ENCODE measurements at regions of chr5 and their contacts with region 1.

Region 1: DNA sequence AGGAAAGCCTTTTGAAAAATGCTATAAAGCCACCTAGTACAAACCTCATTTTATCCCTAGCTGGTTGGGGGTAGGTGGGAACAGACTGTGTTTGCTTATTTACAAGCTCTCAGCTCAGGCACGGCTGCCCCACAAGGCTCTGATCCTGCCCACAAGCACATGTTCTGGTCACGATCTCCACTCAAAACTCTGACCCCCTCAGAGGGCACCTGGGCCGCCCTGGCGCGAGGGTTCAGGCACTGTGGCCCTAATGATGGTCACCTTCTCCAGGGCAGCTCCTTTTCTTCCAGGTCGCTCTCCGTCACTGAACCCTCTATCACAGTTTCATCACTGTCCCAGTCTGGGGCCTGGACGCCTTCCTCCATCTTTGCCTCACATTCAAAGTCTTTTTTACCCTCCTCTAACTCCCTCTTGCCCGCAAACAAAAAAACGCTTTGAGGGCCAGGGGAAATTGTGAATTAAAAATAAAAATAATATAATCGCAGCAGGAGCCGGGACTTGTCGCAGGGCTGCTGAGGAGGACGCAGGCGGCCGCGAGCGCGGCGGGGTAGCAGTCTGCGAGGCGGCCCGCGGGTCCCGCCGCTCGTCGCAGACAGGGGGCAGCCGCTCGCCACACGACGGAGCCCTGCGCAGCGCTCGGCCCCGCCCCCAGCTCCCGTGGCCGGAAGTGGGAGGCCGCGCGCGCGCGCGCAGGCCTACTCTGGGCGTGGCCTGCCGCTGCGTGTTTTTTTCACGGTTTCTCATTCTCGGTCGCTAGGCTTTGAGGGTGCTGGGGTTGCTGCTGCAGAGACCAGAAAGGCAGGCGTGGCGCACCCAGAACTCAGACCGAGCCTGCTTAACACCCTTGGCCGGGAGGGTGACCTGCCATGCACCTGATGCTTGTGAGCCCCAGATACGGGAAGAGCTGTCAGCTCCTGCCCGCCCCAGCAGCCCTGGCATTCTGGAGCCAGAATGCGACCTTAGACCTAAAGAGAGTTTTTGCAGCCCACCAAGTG is at the start of gene ANKRD31:
- DNase-seq: peak; percentile 90
- H3K4me3 Mint-ChIP-seq: peak within 1 kb of the TSS; percentile 96
- H3K27ac Mint-ChIP-seq: peak within 1 kb of the TSS; percentile 94
- H3K4me1 Mint-ChIP-seq: peaks cover 15% of the 10 kb centered on the region
- H3K27me3 Mint-ChIP-seq: no peaks in the 10 kb centered on the region
- total RNA-seq, gene ANKRD31: 0.29 to 0.33 TPM

Region 2: GRCh38 chr5:74993743-74994142 is 242.9 kb before region 1 on chr5:
- CTCF ChIA-PET with region 1: no interaction called
- POLR2A ChIA-PET with region 1: no interaction called
- intact Hi-C with region 1: no loop called
- DNase-seq: no peak
- H3K4me3 Mint-ChIP-seq: no peak overlapping the region
- H3K27ac Mint-ChIP-seq: no peak overlapping the region
- H3K4me1 Mint-ChIP-seq: no peaks in the 10 kb centered on the region
- H3K27me3 Mint-ChIP-seq: peaks cover 5% of the 10 kb centered on the region

Region 3: DNA sequence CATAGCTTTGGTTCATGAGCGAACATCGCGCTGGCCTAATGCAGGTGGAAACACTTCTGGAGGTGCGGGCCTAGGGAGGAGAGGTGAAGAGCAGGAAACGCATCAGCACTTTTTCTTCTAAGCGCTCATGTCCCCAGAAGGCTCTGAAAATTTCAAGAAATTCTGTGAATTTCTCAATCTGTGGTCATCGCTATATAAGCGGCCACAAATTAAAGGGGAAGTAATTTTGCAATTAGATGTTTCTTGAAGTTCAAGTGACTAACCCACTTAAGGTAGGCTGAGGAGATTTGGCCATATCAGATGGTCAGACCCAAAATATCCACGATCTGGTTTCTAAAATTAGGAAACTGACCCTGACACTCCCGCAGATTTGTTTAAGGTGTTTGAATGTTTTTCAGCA is 83.7 kb after region 1 on chr5:
- CTCF ChIA-PET with region 1: interaction called, 4 read pairs
- POLR2A ChIA-PET with region 1: no interaction called
- intact Hi-C with region 1: loop called (anchors 5 kb)
- DNase-seq: no peak
- H3K4me3 Mint-ChIP-seq: no peak overlapping the region
- H3K27ac Mint-ChIP-seq: no peak overlapping the region
- H3K4me1 Mint-ChIP-seq: peaks cover 21% of the 10 kb centered on the region
- H3K27me3 Mint-ChIP-seq: no peaks in the 10 kb centered on the region

Region 4: DNA sequence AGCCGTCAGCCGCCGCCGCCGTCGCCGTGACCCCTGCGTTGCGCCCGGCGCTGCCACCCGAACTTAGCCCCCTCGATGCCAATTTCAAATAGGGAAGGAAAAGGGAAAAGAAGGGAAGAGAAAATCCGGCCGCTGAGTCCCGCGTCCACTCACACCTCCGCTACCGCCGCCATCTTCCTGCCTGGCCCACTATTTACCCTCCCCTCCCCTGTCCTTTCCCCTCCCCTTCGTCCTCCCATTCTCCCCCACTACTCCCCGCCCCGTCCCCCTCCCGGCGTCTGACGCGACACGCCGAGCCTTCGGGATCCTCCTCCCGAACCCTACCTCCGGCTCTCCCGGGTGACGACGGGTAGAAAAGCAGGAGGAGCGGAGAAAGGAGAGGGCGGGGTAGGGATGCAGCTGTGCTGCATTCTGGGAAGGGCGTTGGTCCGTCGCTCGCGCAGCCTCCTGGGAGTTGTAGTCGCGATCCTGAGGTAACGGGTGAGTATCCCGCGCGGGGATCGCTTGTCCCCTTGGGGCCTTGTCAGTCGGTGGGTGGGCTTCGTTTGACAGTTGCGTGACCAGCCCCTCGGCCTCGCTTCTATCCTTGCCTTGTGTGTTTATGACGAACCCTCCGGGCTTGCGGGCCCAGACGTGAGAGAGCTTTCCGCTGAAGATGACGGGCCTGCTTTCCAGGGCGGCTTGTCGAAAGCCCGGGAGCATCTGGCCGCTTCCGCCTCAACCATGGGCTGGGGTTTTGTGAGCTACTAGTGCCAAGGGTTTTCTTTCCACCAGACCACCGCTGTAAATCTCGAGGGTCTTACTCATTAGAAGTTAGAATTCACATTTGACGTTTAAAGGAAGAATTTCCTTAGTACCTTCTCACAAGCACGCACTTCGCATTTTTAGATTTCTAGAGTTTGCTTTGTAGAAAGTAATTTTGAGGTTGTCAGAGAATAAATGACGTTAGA is 275.1 kb after region 1 on chr5 and contains the starts of genes CERT1 and POLK:
- CTCF ChIA-PET with region 1: no interaction called
- POLR2A ChIA-PET with region 1: no interaction called
- intact Hi-C with region 1: loop called (anchors 1 kb)
- DNase-seq: peak; percentile 99
- H3K4me3 Mint-ChIP-seq: peak within 1 kb of the TSS; percentile 98
- H3K27ac Mint-ChIP-seq: peak within 1 kb of the TSS; percentile 96
- H3K4me1 Mint-ChIP-seq: peaks cover 55% of the 10 kb centered on the region
- H3K27me3 Mint-ChIP-seq: no peaks in the 10 kb centered on the region
- total RNA-seq, gene CERT1: 32.3 to 34.4 TPM
- total RNA-seq, gene POLK: 33.9 to 36.5 TPM

Region 5: GRCh38 chr5:75717082-75717922 is 480.7 kb after region 1 on chr5 and contains the start of gene POC5:
- CTCF ChIA-PET with region 1: interaction called, 7 read pairs
- POLR2A ChIA-PET with region 1: interaction called, 9 read pairs
- intact Hi-C with region 1: loop called (anchors 1 kb)
- DNase-seq: peak; percentile 99
- H3K4me3 Mint-ChIP-seq: peak within 1 kb of the TSS; percentile 98
- H3K27ac Mint-ChIP-seq: peak within 1 kb of the TSS; percentile 99
- H3K4me1 Mint-ChIP-seq: peaks cover 28% of the 10 kb centered on the region
- H3K27me3 Mint-ChIP-seq: no peaks in the 10 kb centered on the region
- total RNA-seq, gene POC5: 20.7 to 21.8 TPM

Region 6: GRCh38 chr5:76256116-76256889 is 1019.7 kb after region 1 on chr5:
- CTCF ChIA-PET with region 1: no interaction called
- POLR2A ChIA-PET with region 1: no interaction called
- intact Hi-C with region 1: loop called (anchors 2 kb)
- DNase-seq: peak; percentile 78
- H3K4me3 Mint-ChIP-seq: no peak overlapping the region
- H3K27ac Mint-ChIP-seq: no peak overlapping the region
- H3K4me1 Mint-ChIP-seq: peaks cover 6% of the 10 kb centered on the region
- H3K27me3 Mint-ChIP-seq: peaks cover 11% of the 10 kb centered on the region